ENCODE measurements at regions of chr3 and their contacts with region 1.

Region 1: GRCh38 chr3:4633078-4634004 is 140.2 kb downstream of the ITPR1 start:
- DNase-seq: no peak
- H3K4me3 ChIP-seq: no peak overlapping the region
- H3K27ac ChIP-seq: no peak overlapping the region
- H3K4me1 ChIP-seq: no peaks in the 10 kb centered on the region; a peak in 1 of 7 replicates
- H3K27me3 ChIP-seq: no peaks in the 10 kb centered on the region
- CTCF ChIP-seq: peak in 2 of 3 experiments; percentile 73 to 78; a peak in 3 of 4 replicates
- EP300 ChIP-seq: no peak
- POLR2A ChIP-seq: no peak
- RAD21 ChIP-seq: peak; percentile 87 to 90

Region 2: GRCh38 chr3:4340411-4341335 is 292.7 kb before region 1 on chr3:
- CTCF ChIA-PET with region 1: interaction called, 21 read pairs
- POLR2A ChIA-PET with region 1: no interaction called
- DNase-seq: no peak
- H3K4me3 ChIP-seq: no peak overlapping the region
- H3K27ac ChIP-seq: no peak overlapping the region
- H3K4me1 ChIP-seq: peaks cover 0 to 7% (median 3%) of the 10 kb centered on the region in 4 experiments; a peak in 3 of 7 replicates
- H3K27me3 ChIP-seq: no peaks in the 10 kb centered on the region
- CTCF ChIP-seq: no peak
- EP300 ChIP-seq: no peak
- POLR2A ChIP-seq: no peak
- RAD21 ChIP-seq: no peak

Region 3: GRCh38 chr3:4504340-4505261 is 128.7 kb before region 1 on chr3:
- CTCF ChIA-PET with region 1: interaction called, 10 read pairs
- POLR2A ChIA-PET with region 1: no interaction called
- DNase-seq: no peak
- H3K4me3 ChIP-seq: no peak overlapping the region
- H3K27ac ChIP-seq: no peak overlapping the region
- H3K4me1 ChIP-seq: peaks cover 0 to 4% (median 1%) of the 10 kb centered on the region in 4 experiments; a peak in 2 of 7 replicates
- H3K27me3 ChIP-seq: no peaks in the 10 kb centered on the region
- CTCF ChIP-seq: no peak
- EP300 ChIP-seq: no peak
- POLR2A ChIP-seq: no peak
- RAD21 ChIP-seq: no peak

Region 4: DNA sequence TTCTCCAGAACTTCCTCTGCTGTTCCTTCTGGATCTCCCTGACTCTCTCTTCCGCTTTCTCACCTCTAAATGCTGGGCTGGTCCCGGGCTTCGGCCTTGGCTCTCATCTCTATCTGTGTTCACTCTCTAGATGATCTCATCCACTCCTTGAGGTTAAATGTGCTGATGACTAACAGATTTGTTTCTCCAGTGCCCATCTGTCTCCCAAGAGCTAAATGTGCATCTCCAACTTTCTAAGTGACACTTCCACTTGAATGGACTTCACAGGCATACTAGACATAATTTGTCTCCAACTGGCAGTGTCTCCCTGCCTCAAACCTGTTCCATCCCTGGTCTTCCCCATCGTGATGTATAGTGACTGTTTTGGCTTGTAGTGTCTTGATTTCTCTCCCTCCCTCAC is 44.9 kb before region 1 on chr3:
- CTCF ChIA-PET with region 1: interaction called, 11 read pairs
- POLR2A ChIA-PET with region 1: no interaction called
- DNase-seq: no peak
- H3K4me3 ChIP-seq: no peak overlapping the region
- H3K27ac ChIP-seq: no peak overlapping the region
- H3K4me1 ChIP-seq: peaks cover 0 to 3% (median 0%) of the 10 kb centered on the region in 4 experiments; a peak in 2 of 7 replicates
- H3K27me3 ChIP-seq: no peaks in the 10 kb centered on the region
- CTCF ChIP-seq: no peak
- EP300 ChIP-seq: no peak
- POLR2A ChIP-seq: no peak
- RAD21 ChIP-seq: no peak